Dorsolateral prefrontal cortex (tissue), 120 donors: ENCODE measurements at regions of chr17 and their contacts with region 1.

Region 1: GRCh38 chr17:66255112-66255511 is 25.9 kb upstream of the APOH start:
- DNase-seq: peak in 2 of 10 donors; percentile 6 to 36
- H3K4me3 ChIP-seq: peak overlapping the region in 1 of 59 donors; percentile 6
- H3K27ac ChIP-seq: no peak overlapping the region
- H3K27me3 ChIP-seq: no peaks in the 10 kb centered on the region
- CTCF ChIP-seq: peak; percentile 36 to 95 (median 83)

Region 2: GRCh38 chr17:66152756-66153155 is 102.4 kb before region 1 on chr17:
- intact Hi-C with region 1: no loop called
- DNase-seq: no peak
- H3K4me3 ChIP-seq: no peak overlapping the region
- H3K27ac ChIP-seq: no peak overlapping the region
- H3K27me3 ChIP-seq: no peaks in the 10 kb centered on the region
- CTCF ChIP-seq: no peak

Region 3: GRCh38 chr17:66214884-66215528 is 40.1 kb before region 1 on chr17:
- intact Hi-C with region 1: no loop called
- DNase-seq: no peak
- H3K4me3 ChIP-seq: no peak overlapping the region
- H3K27ac ChIP-seq: no peak overlapping the region
- H3K27me3 ChIP-seq: peaks cover 0 to 4% (median 0%) of the 10 kb centered on the region in 45 donors
- CTCF ChIP-seq: no peak

Region 4: DNA sequence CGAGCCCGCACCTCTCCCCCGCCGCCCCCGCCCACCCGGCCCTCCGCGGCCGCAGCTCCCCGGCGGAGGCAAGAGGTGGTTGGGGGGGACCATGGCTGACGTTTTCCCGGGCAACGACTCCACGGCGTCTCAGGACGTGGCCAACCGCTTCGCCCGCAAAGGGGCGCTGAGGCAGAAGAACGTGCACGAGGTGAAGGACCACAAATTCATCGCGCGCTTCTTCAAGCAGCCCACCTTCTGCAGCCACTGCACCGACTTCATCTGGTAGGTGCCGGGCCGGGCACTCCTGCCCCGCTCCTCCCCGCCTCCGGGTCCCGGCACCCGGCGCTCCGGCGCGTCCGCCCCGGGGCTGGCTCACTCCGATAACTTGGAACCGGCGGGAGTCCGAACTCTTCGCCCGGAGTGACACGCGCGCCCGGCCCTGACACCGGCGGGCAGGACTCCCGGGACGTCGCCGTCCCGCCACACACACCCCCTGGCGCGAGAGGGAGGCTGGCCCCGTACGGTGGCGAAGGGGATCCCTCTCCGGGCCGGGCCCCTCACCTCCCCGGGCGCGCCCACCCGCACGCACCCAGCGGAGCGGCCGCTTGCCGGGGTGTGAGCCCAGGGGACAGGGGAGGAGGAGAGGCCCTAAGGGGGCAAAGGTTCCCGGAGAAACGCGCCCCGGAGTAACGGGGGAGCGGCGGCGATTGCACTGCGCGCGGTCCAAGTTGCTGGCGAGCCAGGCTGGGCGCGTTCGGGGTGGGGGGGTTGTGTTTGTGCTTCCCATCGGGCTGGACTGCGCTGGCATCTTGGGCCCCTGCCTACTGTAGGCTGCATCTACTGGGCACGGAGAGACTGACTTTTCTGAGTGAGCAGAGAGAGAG is 47.9 kb after region 1 on chr17:
- intact Hi-C with region 1: no loop called
- DNase-seq: peak in 9 of 10 donors; percentile 23 to 60 (median 50)
- H3K4me3 ChIP-seq: peak overlapping the region; percentile 61 to 97 (median 89)
- H3K27ac ChIP-seq: peak overlapping the region in 56 of 59 donors; percentile 2 to 90 (median 78)
- H3K27me3 ChIP-seq: no peaks in the 10 kb centered on the region
- CTCF ChIP-seq: peak in 3 of 56 donors; percentile 8 to 18 (median 12)

Region 5: GRCh38 chr17:66405836-66406677 is 150.9 kb after region 1 on chr17:
- intact Hi-C with region 1: no loop called
- DNase-seq: peak in 1 of 10 donors; percentile 53
- H3K4me3 ChIP-seq: peak overlapping the region in 1 of 59 donors; percentile 16
- H3K27ac ChIP-seq: peak overlapping the region in 7 of 59 donors; percentile 16 to 74 (median 57)
- H3K27me3 ChIP-seq: no peaks in the 10 kb centered on the region
- CTCF ChIP-seq: no peak

Region 6: DNA sequence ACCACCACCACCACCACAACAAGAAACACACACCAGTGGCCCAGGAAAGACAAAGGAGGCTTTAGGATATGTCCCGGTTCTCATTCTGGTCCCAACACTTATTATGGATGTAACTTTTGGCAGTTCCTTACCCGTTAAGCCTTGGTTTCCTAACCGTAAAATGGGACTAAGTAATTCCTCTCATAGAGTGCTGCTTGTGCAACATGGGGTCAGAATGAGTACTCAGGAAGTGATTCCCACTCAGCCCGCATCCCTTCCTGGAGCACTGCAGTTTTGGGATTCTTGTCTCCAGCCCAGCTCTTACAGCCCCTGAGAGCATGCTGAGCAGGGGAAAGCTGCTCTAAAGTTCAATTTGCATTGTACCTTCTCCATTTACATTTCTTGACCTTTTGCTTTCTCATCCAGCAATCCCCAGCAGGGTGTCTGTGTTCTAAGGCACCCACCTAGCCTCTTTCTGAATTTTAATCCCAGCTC is 309.9 kb after region 1 on chr17:
- intact Hi-C with region 1: loop called in 1 of 2 experiments (anchors 2 kb)
- DNase-seq: no peak
- H3K4me3 ChIP-seq: no peak overlapping the region
- H3K27ac ChIP-seq: peak overlapping the region in 2 of 59 donors; percentile 32 to 43
- H3K27me3 ChIP-seq: no peaks in the 10 kb centered on the region
- CTCF ChIP-seq: no peak

Region 7: GRCh38 chr17:66625311-66625775 is 370.2 kb after region 1 on chr17:
- intact Hi-C with region 1: loop called in 1 of 2 experiments (anchors 5 kb)
- DNase-seq: no peak
- H3K4me3 ChIP-seq: no peak overlapping the region
- H3K27ac ChIP-seq: no peak overlapping the region
- H3K27me3 ChIP-seq: no peaks in the 10 kb centered on the region
- CTCF ChIP-seq: peak; percentile 19 to 79 (median 66)

Region 8: DNA sequence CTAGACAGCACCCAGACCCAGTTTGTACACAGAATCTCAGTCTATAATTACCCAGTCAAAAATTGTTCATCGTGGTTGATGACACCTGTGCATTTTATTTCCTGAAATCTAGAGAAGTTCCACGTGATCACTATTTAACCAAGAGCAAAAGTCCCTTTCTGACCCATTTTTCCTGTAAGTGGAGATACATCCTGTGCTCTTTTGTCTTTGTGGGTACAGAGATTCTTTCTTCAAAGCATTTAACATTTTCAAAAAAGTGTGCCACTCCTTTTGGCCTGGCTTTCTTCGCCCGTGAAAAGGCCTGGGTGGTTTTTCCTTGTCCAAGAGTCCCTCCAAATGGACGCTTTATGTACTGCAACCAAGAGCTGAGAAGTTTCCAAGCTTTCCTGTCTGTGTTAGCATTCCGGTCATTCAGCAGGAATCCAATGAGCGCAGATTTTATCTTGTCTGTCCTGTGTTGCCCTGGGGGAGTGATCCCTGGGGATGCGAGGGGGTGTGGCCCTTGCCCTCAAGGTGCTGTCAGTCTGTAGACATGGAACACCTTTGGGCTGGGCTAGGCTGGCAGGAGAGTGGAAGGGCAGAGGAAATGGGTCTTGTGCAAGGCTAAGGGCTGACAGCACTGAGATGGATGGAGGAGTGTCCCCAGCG is 418.7 kb after region 1 on chr17:
- intact Hi-C with region 1: loop called (anchors 1 kb)
- DNase-seq: peak in 6 of 10 donors; percentile 35 to 64 (median 53)
- H3K4me3 ChIP-seq: peak overlapping the region in 1 of 59 donors; percentile 4
- H3K27ac ChIP-seq: peak overlapping the region in 54 of 59 donors; percentile 3 to 95 (median 81)
- H3K27me3 ChIP-seq: no peaks in the 10 kb centered on the region
- CTCF ChIP-seq: peak; percentile 66 to 92 (median 82)

Region 9: GRCh38 chr17:66900126-66901010 is 645.3 kb after region 1 on chr17:
- intact Hi-C with region 1: loop called in 1 of 2 experiments (anchors 5 kb)
- DNase-seq: no peak
- H3K4me3 ChIP-seq: no peak overlapping the region
- H3K27ac ChIP-seq: no peak overlapping the region
- H3K27me3 ChIP-seq: peaks cover 0 to 8% (median 0%) of the 10 kb centered on the region in 45 donors
- CTCF ChIP-seq: peak; percentile 24 to 73 (median 52)